CD14-positive monocyte (primary cell): ENCODE measurements at regions of chr18 and their contacts with region 1.

Region 1: DNA sequence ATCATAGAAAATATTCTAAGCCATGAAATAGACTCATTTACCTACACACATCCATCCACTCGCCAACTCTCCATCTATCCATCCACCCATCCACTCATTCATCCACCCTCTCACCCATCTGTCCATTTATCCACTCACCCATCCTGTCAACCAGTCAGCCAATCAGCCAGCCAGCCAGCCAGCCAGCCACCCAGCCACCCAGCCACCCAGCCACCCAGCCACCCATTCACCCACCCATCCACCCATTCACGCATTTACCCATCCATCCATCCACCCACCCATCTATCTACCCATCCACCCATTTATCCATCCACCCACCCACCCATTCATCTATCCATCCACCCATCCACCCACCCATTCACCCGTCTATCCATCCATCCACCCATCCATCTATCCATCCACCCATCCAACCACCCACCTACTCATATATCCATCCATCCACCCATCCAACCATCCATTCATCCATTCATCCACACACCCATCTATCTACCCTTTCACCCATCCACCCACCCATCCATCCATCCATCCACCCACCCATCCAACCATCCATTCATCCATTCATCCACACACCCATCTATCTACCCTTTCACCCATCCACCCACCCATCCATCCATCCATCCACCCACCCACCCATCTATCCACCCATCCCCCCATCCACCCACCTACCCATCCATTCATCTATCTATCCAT is 185.1 kb downstream of the LOXHD1 start:
- DNase-seq: no peak
- H3K4me3 ChIP-seq: no peak overlapping the region
- H3K4me3 Mint-ChIP-seq: no peak overlapping the region
- H3K27ac ChIP-seq: no peak overlapping the region
- H3K27ac Mint-ChIP-seq: peak overlapping the region in 1 of 7 donors; percentile 8
- H3K4me1 ChIP-seq: no peaks in the 10 kb centered on the region
- H3K4me1 Mint-ChIP-seq: no peaks in the 10 kb centered on the region
- H3K27me3 ChIP-seq: no peaks in the 10 kb centered on the region
- H3K27me3 Mint-ChIP-seq: peaks cover 2 to 5% (median 4%) of the 10 kb centered on the region in 3 donors
- CTCF ChIP-seq: no peak

Region 2: GRCh38 chr18:46424898-46425297 is 47.1 kb before region 1 on chr18:
- intact Hi-C with region 1: no loop called
- DNase-seq: no peak
- H3K4me3 ChIP-seq: no peak overlapping the region
- H3K4me3 Mint-ChIP-seq: no peak overlapping the region
- H3K27ac ChIP-seq: no peak overlapping the region
- H3K27ac Mint-ChIP-seq: no peak overlapping the region
- H3K4me1 ChIP-seq: no peaks in the 10 kb centered on the region
- H3K4me1 Mint-ChIP-seq: no peaks in the 10 kb centered on the region
- H3K27me3 ChIP-seq: no peaks in the 10 kb centered on the region
- H3K27me3 Mint-ChIP-seq: peaks cover 0 to 8% (median 4%) of the 10 kb centered on the region in 3 donors
- CTCF ChIP-seq: no peak

Region 3: DNA sequence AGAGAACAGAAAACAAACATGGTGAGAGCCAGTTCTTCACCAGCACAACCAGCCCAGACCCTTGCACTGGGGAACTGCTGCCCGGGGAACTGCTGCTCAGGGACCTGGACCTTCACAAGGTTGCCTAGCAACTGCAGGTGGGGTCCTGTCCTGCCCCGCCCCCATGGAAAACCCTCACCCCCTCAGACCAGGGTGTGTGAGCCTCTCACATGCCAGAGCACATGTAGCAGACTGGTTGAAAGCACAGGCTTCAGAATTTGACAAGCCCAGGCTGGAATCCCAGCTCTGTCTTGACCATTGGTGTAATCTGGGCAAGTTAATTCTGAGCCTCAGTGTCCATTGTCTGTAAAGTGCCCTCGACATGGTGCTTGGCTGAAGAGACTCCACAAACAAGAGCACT is 66.4 kb after region 1 on chr18:
- intact Hi-C with region 1: loop called in 1 of 2 experiments (anchors 2 kb)
- DNase-seq: no peak
- H3K4me3 ChIP-seq: no peak overlapping the region
- H3K4me3 Mint-ChIP-seq: no peak overlapping the region
- H3K27ac ChIP-seq: no peak overlapping the region
- H3K27ac Mint-ChIP-seq: no peak overlapping the region
- H3K4me1 ChIP-seq: no peaks in the 10 kb centered on the region
- H3K4me1 Mint-ChIP-seq: no peaks in the 10 kb centered on the region
- H3K27me3 ChIP-seq: no peaks in the 10 kb centered on the region
- H3K27me3 Mint-ChIP-seq: peaks cover 1 to 4% (median 3%) of the 10 kb centered on the region in 3 donors
- CTCF ChIP-seq: no peak